Body of pancreas (tissue), 4 donors: ENCODE measurements at regions of chr10 and their contacts with region 1.

Region 1: GRCh38 chr10:11515596-11516430 is 95.6 kb downstream of the USP6NL start:
- DNase-seq: peak; percentile 55 to 76 (median 64)
- ATAC-seq: peak; percentile 72
- H3K4me3 ChIP-seq: no peak overlapping the region
- H3K27ac ChIP-seq: no peak overlapping the region
- H3K4me1 ChIP-seq: peaks cover 3% of the 10 kb centered on the region
- H3K27me3 ChIP-seq: no peaks in the 10 kb centered on the region
- CTCF ChIP-seq: peak; percentile 60 to 91 (median 89)
- POLR2A ChIP-seq: no peak

Region 2: DNA sequence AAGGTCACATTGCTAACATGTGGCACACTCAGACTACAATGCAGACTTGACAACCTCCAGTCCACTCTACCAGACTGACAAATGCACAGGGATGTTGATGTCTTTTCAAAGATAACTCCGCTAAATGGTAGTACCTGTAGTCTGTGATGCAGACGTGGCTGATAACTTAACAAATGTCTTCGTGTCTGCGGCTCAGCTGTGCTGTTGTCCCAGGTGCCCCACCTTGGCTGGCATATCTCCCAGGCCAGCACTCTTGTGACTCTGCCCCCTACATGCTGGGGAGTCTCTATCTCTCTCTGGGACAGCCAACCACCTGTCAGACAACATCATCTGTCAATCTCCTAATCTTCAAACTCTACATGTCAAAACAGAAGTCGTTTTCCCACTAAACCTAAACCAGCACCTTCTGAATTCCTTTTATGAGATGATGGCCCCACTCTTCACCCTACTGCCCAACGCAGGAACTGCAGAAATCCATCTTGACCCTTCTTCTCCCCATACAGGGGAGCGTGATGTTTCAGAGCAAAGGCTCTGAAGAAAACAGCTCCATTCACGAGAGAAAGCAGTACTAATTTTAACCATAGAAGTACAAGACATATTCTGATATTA is 60.8 kb before region 1 on chr10:
- intact Hi-C with region 1: no loop called
- DNase-seq: no peak
- ATAC-seq: no peak
- H3K4me3 ChIP-seq: no peak overlapping the region
- H3K27ac ChIP-seq: no peak overlapping the region
- H3K4me1 ChIP-seq: no peaks in the 10 kb centered on the region
- H3K27me3 ChIP-seq: no peaks in the 10 kb centered on the region
- CTCF ChIP-seq: no peak
- POLR2A ChIP-seq: no peak

Region 3: DNA sequence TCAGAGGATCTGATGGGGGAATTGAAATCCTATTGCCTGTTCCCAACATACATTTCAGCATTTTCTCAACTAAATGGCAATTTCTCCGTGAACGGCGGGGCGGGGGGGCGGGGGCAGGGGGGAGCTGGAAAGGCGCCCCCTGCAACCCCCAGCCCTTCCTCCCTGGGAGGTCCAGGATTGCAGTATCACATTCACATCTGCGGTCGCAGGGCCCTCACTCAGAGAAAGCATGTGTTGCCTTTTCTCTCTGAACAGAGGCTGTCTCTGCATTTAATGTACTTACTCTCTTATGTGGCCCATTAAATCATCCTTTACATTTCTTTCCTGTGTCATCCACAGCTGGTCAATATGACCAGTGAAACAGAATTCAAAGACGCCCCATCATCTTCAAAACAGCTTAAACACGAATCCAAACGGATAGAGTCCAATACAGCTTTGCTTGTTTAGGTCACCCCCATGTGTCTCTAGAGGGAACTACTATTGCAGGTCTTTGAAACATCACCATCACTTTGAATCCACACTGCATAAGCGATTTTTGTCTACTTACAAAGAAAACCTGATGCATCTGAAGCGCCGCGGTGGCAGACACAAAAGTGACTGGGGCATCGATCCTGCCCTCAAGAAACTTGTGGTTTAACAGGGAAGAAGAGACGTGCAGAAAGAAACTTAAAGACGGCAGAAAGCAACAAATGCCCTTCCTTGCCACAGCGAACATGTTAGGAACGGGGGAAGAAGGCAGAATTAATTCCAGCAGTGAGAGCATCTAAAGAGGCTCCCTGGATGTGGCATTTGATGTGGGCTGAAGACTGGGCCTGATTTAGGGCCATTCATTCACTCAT is 209.3 kb after region 1 on chr10:
- intact Hi-C with region 1: loop called (anchors 10 kb)
- DNase-seq: peak in 1 of 4 donors; percentile 42
- ATAC-seq: peak; percentile 59
- H3K4me3 ChIP-seq: no peak overlapping the region
- H3K27ac ChIP-seq: peak overlapping the region; percentile 32 to 64 (median 56)
- H3K4me1 ChIP-seq: no peaks in the 10 kb centered on the region
- H3K27me3 ChIP-seq: no peaks in the 10 kb centered on the region
- CTCF ChIP-seq: peak; percentile 6 to 80 (median 67)
- POLR2A ChIP-seq: no peak

Region 4: DNA sequence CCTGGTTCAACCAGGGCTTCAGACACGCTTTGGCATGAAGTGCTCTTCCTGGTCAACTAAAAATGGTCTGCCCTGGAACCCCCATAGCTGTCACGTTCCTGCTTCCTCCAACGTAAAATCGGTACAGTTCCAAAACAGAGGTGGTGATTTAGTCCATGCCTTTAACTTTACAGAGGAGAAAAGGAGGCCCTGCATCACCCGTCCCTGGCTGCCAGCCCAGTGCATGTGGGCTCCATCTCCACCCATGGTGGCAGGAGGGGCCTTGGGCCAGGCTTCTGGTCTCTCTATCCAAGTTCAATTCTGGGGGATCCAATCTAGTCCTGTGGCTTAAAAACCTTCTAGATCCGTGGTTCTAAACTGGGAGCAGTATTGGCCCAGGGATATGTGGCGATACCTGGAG is 245.0 kb after region 1 on chr10:
- intact Hi-C with region 1: loop called (anchors 10 kb)
- DNase-seq: no peak
- ATAC-seq: no peak
- H3K4me3 ChIP-seq: no peak overlapping the region
- H3K27ac ChIP-seq: no peak overlapping the region
- H3K4me1 ChIP-seq: peaks cover 24% of the 10 kb centered on the region
- H3K27me3 ChIP-seq: no peaks in the 10 kb centered on the region
- CTCF ChIP-seq: no peak
- POLR2A ChIP-seq: no peak

Region 5: DNA sequence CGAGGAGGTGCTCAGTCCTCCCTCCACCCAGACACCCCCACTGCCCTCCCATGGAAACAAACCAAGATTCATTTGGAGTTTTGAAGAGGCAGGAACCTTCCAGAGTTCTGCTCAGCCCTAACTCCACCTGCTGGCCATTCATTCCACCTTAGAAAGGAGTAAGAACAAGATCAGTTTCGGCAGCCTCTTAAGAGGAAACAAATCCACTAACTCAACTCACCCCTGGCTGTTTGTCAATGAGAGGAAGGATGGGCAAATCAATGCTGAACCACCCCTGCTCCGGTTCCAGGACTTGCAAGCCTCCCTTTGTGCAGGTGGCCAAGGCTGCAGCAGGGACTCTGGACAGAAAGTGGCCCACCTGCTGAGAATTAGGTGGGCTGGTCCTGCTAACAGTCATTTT is 1459.5 kb after region 1 on chr10:
- intact Hi-C with region 1: no loop called
- DNase-seq: no peak
- ATAC-seq: no peak
- H3K4me3 ChIP-seq: no peak overlapping the region
- H3K27ac ChIP-seq: no peak overlapping the region
- H3K4me1 ChIP-seq: no peaks in the 10 kb centered on the region
- H3K27me3 ChIP-seq: no peaks in the 10 kb centered on the region
- CTCF ChIP-seq: no peak
- POLR2A ChIP-seq: no peak